Breast epithelium (tissue), 4 donors: ENCODE measurements at regions of chr7 and their contacts with region 1.

Region 1: DNA sequence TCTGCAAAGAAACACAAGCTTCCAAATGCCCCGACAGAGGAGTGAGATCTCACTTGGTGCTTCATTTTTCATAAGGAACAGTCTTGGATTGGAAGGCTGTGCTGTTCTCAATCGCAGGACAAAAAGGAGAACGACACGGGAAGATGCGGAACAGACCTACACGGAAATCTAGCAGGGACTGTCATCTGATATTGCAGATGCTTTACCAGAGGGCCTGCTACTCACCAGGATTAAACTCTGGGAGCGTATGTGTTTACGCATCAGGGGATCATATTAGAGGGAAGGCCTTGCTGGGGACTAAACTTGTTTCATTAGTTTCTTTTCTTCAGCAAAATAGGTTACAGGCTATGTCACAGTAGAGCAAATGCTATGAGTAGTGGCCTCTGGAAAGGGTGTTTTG is 82.8 kb upstream of the EEPD1 start:
- DNase-seq: no peak
- H3K4me3 ChIP-seq: no peak overlapping the region
- H3K27ac ChIP-seq: no peak overlapping the region
- H3K4me1 ChIP-seq: no peaks in the 10 kb centered on the region
- H3K27me3 ChIP-seq: no peaks in the 10 kb centered on the region
- CTCF ChIP-seq: no peak
- POLR2A ChIP-seq: no peak

Region 2: DNA sequence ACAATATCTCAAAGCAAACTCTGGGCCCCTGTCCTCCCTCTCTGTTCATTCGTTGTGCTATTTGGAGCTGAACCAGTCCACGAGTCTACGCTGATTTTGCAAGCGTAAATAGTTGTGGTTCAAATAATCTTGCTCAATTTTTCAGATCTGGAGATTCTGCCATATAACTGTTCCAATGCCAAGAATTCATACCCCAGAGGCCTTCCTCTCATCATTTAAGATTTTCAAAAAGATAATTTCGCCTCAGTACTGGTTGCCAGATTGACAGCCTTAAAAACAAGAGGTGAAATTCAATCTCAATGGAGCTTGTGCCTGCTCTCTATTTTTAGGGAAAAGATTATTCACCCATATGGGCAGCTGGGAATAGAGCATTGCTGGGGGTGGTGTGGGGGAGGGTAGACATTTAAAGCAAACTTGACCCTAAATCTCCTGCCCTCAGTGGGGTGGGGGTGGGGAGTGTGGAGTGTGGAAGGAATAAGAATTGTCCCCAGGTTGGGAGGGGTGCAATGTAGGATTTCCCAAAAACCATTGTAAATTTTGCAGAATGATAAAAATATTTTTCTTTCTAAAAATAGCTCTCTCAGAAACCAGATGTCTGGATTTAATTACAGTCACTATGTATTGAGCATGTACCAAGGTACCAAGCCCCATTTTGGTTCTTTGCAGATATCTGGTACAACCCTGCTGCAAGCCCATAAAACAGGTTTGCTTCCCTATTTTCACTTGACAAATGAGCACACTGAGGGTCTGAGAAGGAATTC is 21.9 kb before region 1 on chr7:
- intact Hi-C with region 1: loop called (anchors 1 kb)
- DNase-seq: peak in 1 of 2 donors; percentile 67
- H3K4me3 ChIP-seq: no peak overlapping the region
- H3K27ac ChIP-seq: peak overlapping the region; percentile 79 to 85
- H3K4me1 ChIP-seq: peaks cover 12 to 18% of the 10 kb centered on the region in 2 donors
- H3K27me3 ChIP-seq: no peaks in the 10 kb centered on the region
- CTCF ChIP-seq: no peak
- POLR2A ChIP-seq: no peak

Region 3: GRCh38 chr7:36137258-36137657 is 67.0 kb after region 1 on chr7:
- intact Hi-C with region 1: no loop called
- DNase-seq: no peak
- H3K4me3 ChIP-seq: no peak overlapping the region
- H3K27ac ChIP-seq: no peak overlapping the region
- H3K4me1 ChIP-seq: no peaks in the 10 kb centered on the region
- H3K27me3 ChIP-seq: no peaks in the 10 kb centered on the region
- CTCF ChIP-seq: no peak
- POLR2A ChIP-seq: no peak

Region 4: GRCh38 chr7:37304921-37305320 is 1234.7 kb after region 1 on chr7:
- intact Hi-C with region 1: no loop called
- DNase-seq: no peak
- H3K4me3 ChIP-seq: no peak overlapping the region
- H3K27ac ChIP-seq: no peak overlapping the region
- H3K4me1 ChIP-seq: no peaks in the 10 kb centered on the region
- H3K27me3 ChIP-seq: no peaks in the 10 kb centered on the region
- CTCF ChIP-seq: no peak
- POLR2A ChIP-seq: no peak